ENCODE measurements at regions of chr21 and their contacts with region 1.

Region 1: DNA sequence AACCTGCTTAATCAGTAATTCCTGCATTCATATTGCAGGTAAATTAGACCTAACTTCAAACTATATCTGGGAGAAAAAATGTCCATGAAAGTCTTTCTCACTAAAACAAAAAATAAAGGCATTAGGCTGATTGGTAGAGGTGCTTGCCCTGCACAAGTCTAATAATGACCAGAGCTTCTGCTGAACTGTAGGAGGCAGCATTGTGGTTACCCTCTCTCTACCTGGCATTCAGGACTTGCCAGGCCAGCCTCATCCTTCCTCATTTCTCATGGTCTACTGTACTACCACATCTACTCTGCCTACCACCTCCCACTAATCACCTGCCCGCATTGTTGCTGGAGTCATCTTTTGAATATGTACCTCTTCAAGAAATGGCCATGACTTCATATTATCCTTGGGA is 60.8 kb upstream of the KRTAP11-1 start:
- DNase-seq: no peak
- H3K4me3 ChIP-seq: no peak overlapping the region
- H3K27ac ChIP-seq: no peak overlapping the region
- H3K4me1 ChIP-seq: no peaks in the 10 kb centered on the region
- H3K27me3 ChIP-seq: no peaks in the 10 kb centered on the region
- CTCF ChIP-seq: no peak
- POLR2A ChIP-seq: no peak

Region 2: DNA sequence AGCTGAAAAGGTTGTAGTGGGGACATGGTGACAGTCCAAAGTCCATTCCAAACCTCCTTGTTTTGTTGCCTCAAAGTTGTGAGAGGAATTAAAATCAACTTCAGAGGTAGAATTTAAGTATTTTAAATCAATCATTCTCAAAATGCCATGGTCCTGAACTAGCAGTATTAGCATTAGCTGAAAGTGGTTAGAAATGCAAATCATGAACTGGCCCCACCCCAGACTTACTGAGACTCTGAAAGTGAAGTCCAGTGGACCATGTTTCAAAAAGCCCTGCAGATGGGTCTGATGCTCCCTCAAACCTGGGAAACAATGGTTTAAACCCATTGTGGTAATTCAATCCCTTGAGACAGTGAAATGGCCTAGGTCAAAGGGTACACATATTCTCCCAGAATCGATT is 24.6 kb before region 1 on chr21:
- intact Hi-C with region 1: no loop called
- DNase-seq: no peak
- H3K4me3 ChIP-seq: no peak overlapping the region
- H3K27ac ChIP-seq: no peak overlapping the region
- H3K4me1 ChIP-seq: no peaks in the 10 kb centered on the region
- H3K27me3 ChIP-seq: no peaks in the 10 kb centered on the region
- CTCF ChIP-seq: no peak
- POLR2A ChIP-seq: no peak

Region 3: GRCh38 chr21:31282095-31282709 is 340.0 kb after region 1 on chr21:
- intact Hi-C with region 1: loop called (anchors 5 kb)
- DNase-seq: no peak
- H3K4me3 ChIP-seq: no peak overlapping the region
- H3K27ac ChIP-seq: no peak overlapping the region
- H3K4me1 ChIP-seq: no peaks in the 10 kb centered on the region
- H3K27me3 ChIP-seq: no peaks in the 10 kb centered on the region
- CTCF ChIP-seq: no peak
- POLR2A ChIP-seq: no peak

Measured in breast epithelium (tissue), 4 donors.